ENCODE measurements at regions of chr4 and their contacts with region 1.

Region 1: GRCh38 chr4:83012687-83013419 is 2.2 kb upstream of the LIN54 start:
- DNase-seq: peak; percentile 99
- H3K4me3 ChIP-seq: peak overlapping the region; percentile 80 to 97 (median 83)
- H3K27ac ChIP-seq: peak overlapping the region; percentile 71
- H3K4me1 ChIP-seq: peaks cover 19% of the 10 kb centered on the region
- H3K27me3 ChIP-seq: no peaks in the 10 kb centered on the region
- CTCF ChIP-seq: peak; percentile 39 to 70
- POLR2A ChIP-seq: peak; percentile 37

Region 2: DNA sequence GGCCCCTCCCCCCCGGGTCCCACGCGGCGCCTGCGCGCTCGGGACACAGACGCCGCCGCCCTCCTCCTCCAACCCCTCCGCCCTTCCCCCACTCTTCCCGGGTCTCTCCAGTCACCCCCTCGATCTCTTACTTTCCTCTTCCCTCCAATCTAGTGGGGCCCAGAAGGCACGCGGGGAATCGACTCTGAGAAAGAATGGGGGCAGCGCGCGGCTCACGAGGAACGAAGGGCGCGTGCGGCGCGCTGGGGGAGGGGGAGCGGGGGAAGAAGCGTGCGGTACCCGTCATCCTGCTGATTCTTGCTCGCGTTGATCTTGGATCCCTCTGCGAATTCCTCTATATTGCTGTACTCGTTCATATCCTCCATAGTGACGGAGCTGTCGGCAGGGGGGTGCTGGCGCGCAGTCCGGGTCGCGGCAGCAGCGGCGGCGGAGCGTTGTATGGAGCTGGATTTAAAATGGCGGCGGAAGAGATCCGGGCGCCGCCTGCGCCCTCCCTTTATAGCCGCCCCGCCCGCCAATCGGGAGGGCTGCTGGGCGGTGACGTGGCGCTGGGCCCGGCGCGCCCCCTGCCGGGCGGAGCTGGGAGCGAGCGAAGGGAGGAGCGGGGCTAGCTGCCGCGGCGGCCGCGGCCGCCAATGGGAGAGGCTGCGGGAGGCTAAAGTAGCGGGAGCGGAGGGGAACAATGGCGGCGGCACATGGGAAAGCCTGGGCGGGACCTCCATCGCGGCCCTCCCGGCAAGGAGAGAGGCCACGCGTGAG is 583.7 kb before region 1 on chr4:
- CTCF ChIA-PET with region 1: no interaction called
- POLR2A ChIA-PET with region 1: no interaction called
- dilution Hi-C with region 1: no loop called
- intact Hi-C with region 1: loop called (anchors 5 kb)
- DNase-seq: peak; percentile 95
- H3K4me3 ChIP-seq: peak overlapping the region; percentile 89 to 100 (median 98)
- H3K27ac ChIP-seq: peak overlapping the region; percentile 99
- H3K4me1 ChIP-seq: peaks cover 31% of the 10 kb centered on the region
- H3K27me3 ChIP-seq: no peaks in the 10 kb centered on the region
- CTCF ChIP-seq: peak; percentile 80 to 99
- POLR2A ChIP-seq: peak; percentile 60

Region 3: GRCh38 chr4:82851885-82852750 is 160.7 kb before region 1 on chr4:
- CTCF ChIA-PET with region 1: interaction called, 12 read pairs
- POLR2A ChIA-PET with region 1: no interaction called
- dilution Hi-C with region 1: no loop called
- intact Hi-C with region 1: no loop called
- DNase-seq: peak; percentile 61
- H3K4me3 ChIP-seq: no peak overlapping the region
- H3K27ac ChIP-seq: no peak overlapping the region
- H3K4me1 ChIP-seq: no peaks in the 10 kb centered on the region
- H3K27me3 ChIP-seq: no peaks in the 10 kb centered on the region
- CTCF ChIP-seq: peak in 1 of 2 donors; percentile 52
- POLR2A ChIP-seq: no peak

Region 4: GRCh38 chr4:82900331-82901128 is 112.3 kb before region 1 on chr4 and contains the start of gene THAP9:
- CTCF ChIA-PET with region 1: interaction called, 11 read pairs
- POLR2A ChIA-PET with region 1: no interaction called
- dilution Hi-C with region 1: no loop called
- intact Hi-C with region 1: loop called (anchors 1 kb)
- DNase-seq: peak; percentile 100
- H3K4me3 ChIP-seq: peak within 1 kb of the TSS; percentile 71 to 92 (median 90)
- H3K27ac ChIP-seq: peak within 1 kb of the TSS; percentile 96
- H3K4me1 ChIP-seq: peaks cover 18% of the 10 kb centered on the region
- H3K27me3 ChIP-seq: no peaks in the 10 kb centered on the region
- CTCF ChIP-seq: no peak
- POLR2A ChIP-seq: peak; percentile 75
- total RNA-seq, gene THAP9: 1.7 and 3.2 TPM in 2 replicates

Region 5: GRCh38 chr4:83074086-83074704 is 61.3 kb after region 1 on chr4:
- CTCF ChIA-PET with region 1: interaction called, 6 read pairs
- POLR2A ChIA-PET with region 1: no interaction called
- dilution Hi-C with region 1: no loop called
- intact Hi-C with region 1: loop called (anchors 1 kb)
- DNase-seq: peak; percentile 72
- H3K4me3 ChIP-seq: no peak overlapping the region
- H3K27ac ChIP-seq: no peak overlapping the region
- H3K4me1 ChIP-seq: peaks cover 28% of the 10 kb centered on the region
- H3K27me3 ChIP-seq: no peaks in the 10 kb centered on the region
- CTCF ChIP-seq: peak; percentile 59 to 63
- POLR2A ChIP-seq: no peak

Region 6: GRCh38 chr4:83252782-83253405 is 240.0 kb after region 1 on chr4:
- CTCF ChIA-PET with region 1: interaction called, 3 read pairs
- POLR2A ChIA-PET with region 1: no interaction called
- dilution Hi-C with region 1: no loop called
- intact Hi-C with region 1: loop called (anchors 1 kb)
- DNase-seq: peak; percentile 81
- H3K4me3 ChIP-seq: no peak overlapping the region
- H3K27ac ChIP-seq: no peak overlapping the region
- H3K4me1 ChIP-seq: peaks cover 32% of the 10 kb centered on the region
- H3K27me3 ChIP-seq: no peaks in the 10 kb centered on the region
- CTCF ChIP-seq: peak; percentile 74 to 84
- POLR2A ChIP-seq: no peak

Measured in endothelial cell of umbilical vein (primary cell).